Activated CD4-positive, alpha-beta T cell treated with anti-CD3 and anti-CD28 coated beads for 36 hours (primary cell): ENCODE measurements at regions of chr16 and their contacts with region 1.

Region 1: DNA sequence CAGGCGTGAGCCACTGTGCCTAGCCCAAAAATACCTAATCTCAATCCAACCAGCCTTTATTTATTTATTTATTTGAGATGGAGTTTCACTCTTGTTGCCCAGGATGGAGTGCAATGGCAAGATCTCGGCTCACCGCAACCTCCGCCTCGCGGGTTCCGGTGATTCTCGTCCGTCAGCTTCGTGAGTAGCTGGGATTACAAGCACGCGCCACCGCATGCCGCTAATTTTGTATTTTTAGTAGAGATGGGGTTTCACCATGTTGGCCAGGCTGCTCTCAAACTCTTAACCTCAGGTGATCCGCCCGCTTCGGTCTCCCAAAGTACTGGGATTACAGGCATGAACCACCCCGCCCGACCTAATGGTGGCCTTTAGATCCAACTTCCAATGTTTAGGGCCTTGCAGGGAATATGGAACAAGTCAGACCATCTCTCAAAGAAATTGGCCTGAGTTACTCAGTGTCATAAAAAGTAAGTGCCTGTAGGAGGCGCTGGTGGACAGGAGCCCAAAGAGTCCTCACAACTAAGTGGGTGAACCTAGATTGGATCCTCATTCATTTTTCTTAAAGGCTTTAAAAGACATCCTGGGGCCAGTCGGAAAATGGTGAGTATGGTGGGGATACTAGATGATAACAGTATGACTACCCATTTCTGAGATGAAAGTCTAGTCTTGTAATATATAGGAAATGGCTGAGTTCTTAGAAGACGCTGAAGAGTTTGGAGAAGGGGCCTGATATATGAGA is 4.6 kb downstream of the ZSCAN10 start:
- DNase-seq: peak; percentile 77
- ATAC-seq: peak; percentile 53
- H3K4me3 Mint-ChIP-seq: no peak overlapping the region
- H3K27ac Mint-ChIP-seq: peak overlapping the region; percentile 29
- H3K4me1 Mint-ChIP-seq: peaks cover 32% of the 10 kb centered on the region
- H3K27me3 Mint-ChIP-seq: no peaks in the 10 kb centered on the region

Region 2: DNA sequence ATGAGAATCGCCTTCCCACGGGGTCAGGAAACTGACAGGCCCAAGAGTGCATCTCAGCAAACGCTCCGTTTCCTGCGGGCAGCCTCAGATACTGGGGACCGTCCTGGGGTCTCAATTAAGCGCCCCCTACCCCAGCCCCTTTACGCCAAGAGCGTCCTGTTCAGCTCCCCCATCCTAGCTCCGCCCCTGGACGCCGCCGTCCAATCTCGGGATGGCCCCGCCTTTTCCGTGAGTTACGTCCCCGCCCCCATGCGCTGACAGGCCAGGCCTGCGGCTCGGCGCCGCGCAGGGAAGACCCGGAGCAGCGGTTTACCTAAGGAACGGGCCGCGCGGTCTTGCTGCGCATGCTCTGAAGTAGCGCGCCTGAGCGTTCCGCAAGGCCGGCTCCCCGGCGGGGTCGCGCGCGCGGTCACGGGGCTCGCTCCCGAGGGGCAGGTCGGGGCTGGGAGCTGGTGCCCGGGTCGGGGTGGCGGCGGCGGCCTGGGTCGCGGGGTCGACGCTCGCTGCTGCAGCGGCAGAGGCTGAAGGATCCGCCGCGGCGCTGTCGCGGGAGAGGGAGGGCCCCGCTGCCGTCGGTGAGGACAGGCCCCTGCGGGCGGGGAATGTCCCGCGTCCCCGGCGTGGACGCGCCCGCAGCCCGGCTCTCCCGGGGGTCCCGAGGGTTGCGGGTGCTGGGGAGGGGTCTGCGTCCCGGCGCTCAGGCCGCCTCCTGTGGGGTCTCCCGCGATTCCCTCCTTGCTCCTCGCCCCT is 182.7 kb before region 1 on chr16 and contains the start of gene FLYWCH1:
- CTCF ChIA-PET with region 1: no interaction called
- POLR2A ChIA-PET with region 1: no interaction called
- intact Hi-C with region 1: no loop called
- DNase-seq: peak; percentile 100
- ATAC-seq: peak; percentile 98
- H3K4me3 Mint-ChIP-seq: peak within 1 kb of the TSS; percentile 81
- H3K27ac Mint-ChIP-seq: peak within 1 kb of the TSS; percentile 82
- H3K4me1 Mint-ChIP-seq: peaks cover 30% of the 10 kb centered on the region
- H3K27me3 Mint-ChIP-seq: no peaks in the 10 kb centered on the region
- total RNA-seq, gene FLYWCH1: 26.6 to 37.9 TPM

Region 3: GRCh38 chr16:3074860-3075522 is 19.5 kb before region 1 on chr16:
- CTCF ChIA-PET with region 1: interaction called, 24 read pairs
- POLR2A ChIA-PET with region 1: interaction called, 6 read pairs
- intact Hi-C with region 1: no loop called
- DNase-seq: peak; percentile 91
- ATAC-seq: peak; percentile 62
- H3K4me3 Mint-ChIP-seq: peak overlapping the region; percentile 78
- H3K27ac Mint-ChIP-seq: peak overlapping the region; percentile 99
- H3K4me1 Mint-ChIP-seq: peaks cover 90% of the 10 kb centered on the region
- H3K27me3 Mint-ChIP-seq: no peaks in the 10 kb centered on the region

Region 4: GRCh38 chr16:3165111-3165822 is 70.8 kb after region 1 on chr16:
- CTCF ChIA-PET with region 1: interaction called, 6 read pairs
- POLR2A ChIA-PET with region 1: no interaction called
- intact Hi-C with region 1: loop called (anchors 1 to 5 kb)
- DNase-seq: no peak
- ATAC-seq: no peak
- H3K4me3 Mint-ChIP-seq: peak overlapping the region; percentile 32
- H3K27ac Mint-ChIP-seq: peak overlapping the region; percentile 68
- H3K4me1 Mint-ChIP-seq: peaks cover 10% of the 10 kb centered on the region
- H3K27me3 Mint-ChIP-seq: peaks cover 2% of the 10 kb centered on the region